ENCODE measurements at regions of chr10 and their contacts with region 1.

Region 1: GRCh38 chr10:69515699-69516259 is 57.4 kb downstream of the NEUROG3 start:
- DNase-seq: peak; percentile 86
- H3K4me3 Mint-ChIP-seq: no peak overlapping the region
- H3K27ac Mint-ChIP-seq: no peak overlapping the region
- H3K4me1 Mint-ChIP-seq: no peaks in the 10 kb centered on the region
- H3K27me3 Mint-ChIP-seq: no peaks in the 10 kb centered on the region

Region 2: DNA sequence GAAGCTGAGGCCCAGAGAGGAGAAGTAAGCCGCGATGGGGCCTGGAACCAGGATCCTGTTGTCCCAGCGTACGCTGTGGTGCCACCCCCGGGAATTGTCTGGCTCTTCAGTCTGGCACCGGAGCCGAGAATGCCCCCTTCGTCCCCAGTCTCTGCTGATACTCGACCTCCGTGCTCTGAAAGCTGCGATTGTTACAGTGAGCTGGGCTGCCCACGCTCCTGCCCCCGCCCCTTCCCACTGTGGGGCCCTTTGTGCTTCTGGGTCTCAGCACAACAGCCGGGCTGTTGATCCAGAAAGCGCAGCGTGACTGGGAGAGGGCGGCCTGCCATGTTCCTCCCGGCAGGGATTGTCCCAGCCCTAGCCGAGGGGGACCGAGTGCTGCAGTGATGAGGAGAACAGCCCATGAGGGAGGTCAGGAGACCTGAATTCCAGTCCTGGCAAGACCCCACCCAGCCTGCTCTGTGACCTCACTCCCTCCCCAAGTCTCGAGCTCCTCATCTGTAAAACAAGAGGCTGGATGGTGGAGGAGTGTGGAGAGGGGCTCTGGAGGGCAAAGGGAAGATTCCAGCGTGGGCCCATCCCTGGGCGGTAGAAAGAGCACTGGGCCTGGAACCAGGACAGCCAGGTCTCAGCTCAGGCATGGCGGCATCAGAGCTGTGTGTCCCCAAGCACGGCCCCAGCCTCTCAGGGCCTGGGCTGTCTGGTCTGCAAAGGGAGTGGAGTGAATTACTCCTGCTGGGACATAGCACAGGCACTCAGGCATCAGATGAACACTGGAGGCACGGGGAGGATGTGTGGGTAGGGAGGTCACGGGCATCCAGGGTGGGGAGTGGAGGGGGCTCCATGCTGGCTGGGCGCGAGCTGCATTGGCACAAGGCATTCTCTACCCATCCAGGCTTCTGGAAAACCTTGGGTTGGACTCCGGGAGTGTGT is 20.9 kb before region 1 on chr10:
- CTCF ChIA-PET with region 1: interaction called, 11 read pairs
- POLR2A ChIA-PET with region 1: no interaction called
- intact Hi-C with region 1: no loop called
- DNase-seq: no peak
- H3K4me3 Mint-ChIP-seq: no peak overlapping the region
- H3K27ac Mint-ChIP-seq: no peak overlapping the region
- H3K4me1 Mint-ChIP-seq: peaks cover 10% of the 10 kb centered on the region
- H3K27me3 Mint-ChIP-seq: no peaks in the 10 kb centered on the region

Region 3: GRCh38 chr10:69612760-69613159 is 97.0 kb after region 1 on chr10:
- CTCF ChIA-PET with region 1: interaction called, 20 read pairs
- POLR2A ChIA-PET with region 1: no interaction called
- intact Hi-C with region 1: no loop called
- DNase-seq: no peak
- H3K4me3 Mint-ChIP-seq: no peak overlapping the region
- H3K27ac Mint-ChIP-seq: no peak overlapping the region
- H3K4me1 Mint-ChIP-seq: no peaks in the 10 kb centered on the region
- H3K27me3 Mint-ChIP-seq: no peaks in the 10 kb centered on the region

Region 4: GRCh38 chr10:69639291-69640195 is 123.8 kb after region 1 on chr10:
- CTCF ChIA-PET with region 1: interaction called, 247 read pairs
- POLR2A ChIA-PET with region 1: interaction called, 4 read pairs
- intact Hi-C with region 1: loop called (anchors 1 kb)
- DNase-seq: peak; percentile 76
- H3K4me3 Mint-ChIP-seq: no peak overlapping the region
- H3K27ac Mint-ChIP-seq: no peak overlapping the region
- H3K4me1 Mint-ChIP-seq: no peaks in the 10 kb centered on the region
- H3K27me3 Mint-ChIP-seq: no peaks in the 10 kb centered on the region

Region 5: DNA sequence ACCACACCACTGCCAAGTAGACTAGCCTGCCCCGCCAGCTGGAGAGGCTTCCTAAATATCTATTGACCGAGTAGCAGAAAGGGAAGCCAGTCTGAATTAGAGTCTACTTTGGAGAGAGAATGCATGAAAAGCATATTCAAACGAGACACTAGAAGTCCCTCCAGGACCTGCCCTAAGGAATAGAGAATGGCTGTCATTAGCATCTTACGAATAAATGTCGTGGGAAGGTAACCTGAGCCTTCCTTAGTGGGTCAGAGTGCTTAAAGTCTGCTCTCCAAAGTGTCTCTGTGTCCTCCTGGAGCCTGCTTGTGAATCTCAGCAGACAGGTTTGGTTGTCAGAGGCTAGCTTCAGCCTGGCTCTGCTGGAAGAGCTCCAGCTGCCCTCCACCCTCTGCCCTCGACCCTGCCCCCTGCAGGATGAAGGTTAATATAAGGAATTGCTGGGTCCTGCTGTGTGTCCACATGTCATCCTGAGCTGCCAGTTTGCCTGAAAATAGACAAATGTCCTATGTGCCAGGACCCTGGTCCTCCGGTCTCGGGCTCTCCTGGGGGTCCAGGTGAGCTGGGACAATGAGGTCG is 147.7 kb after region 1 on chr10:
- CTCF ChIA-PET with region 1: interaction called, 10 read pairs
- POLR2A ChIA-PET with region 1: no interaction called
- intact Hi-C with region 1: no loop called
- DNase-seq: no peak
- H3K4me3 Mint-ChIP-seq: no peak overlapping the region
- H3K27ac Mint-ChIP-seq: no peak overlapping the region
- H3K4me1 Mint-ChIP-seq: no peaks in the 10 kb centered on the region
- H3K27me3 Mint-ChIP-seq: peaks cover 15% of the 10 kb centered on the region

Region 6: DNA sequence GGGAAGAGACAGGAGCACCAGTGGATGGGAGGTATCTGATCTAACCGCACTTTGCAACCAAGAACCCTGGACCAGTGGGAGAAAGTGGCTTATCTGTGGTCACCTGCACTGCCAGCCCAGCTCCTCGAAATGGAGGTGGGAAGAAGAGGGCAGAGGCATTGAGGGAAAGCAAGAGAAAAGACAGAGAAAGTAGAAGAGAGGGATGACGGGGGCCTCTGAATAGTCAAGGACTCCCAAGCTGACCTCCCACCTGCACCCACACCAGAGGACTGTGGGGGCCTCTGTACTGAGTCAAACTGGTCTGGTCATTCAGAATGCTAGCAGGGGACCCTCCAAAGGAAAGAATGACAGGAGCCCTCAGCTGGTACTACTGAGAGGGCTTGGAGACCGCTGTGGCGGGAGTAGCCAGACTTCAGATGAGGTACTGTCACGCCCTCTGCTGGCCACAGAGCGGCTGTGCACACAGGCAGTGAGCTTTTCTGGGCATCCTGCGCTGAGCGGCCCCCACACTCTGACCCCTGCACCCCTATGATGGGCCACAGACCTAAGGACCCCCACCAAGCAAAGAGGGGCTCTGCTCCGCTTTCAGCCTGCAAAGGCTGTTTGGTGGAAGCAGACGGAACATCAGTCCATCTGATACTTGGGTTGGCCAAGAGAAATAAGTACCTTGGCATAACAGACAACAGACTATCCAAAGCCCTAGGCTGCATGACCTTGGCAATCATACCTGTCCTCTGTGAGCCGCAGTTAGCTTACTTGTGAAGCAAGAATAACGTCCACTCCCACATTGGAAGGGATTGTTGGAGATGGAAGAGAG is 398.8 kb after region 1 on chr10:
- CTCF ChIA-PET with region 1: interaction called, 5 read pairs
- POLR2A ChIA-PET with region 1: no interaction called
- intact Hi-C with region 1: loop called (anchors 5 kb)
- DNase-seq: peak; percentile 69
- H3K4me3 Mint-ChIP-seq: no peak overlapping the region
- H3K27ac Mint-ChIP-seq: no peak overlapping the region
- H3K4me1 Mint-ChIP-seq: no peaks in the 10 kb centered on the region
- H3K27me3 Mint-ChIP-seq: peaks cover 2% of the 10 kb centered on the region

Measured in activated CD4-positive, alpha-beta memory T cell treated with anti-CD3 and anti-CD28 coated beads for 36 hours (primary cell).